ENCODE measurements at regions of chr10 and their contacts with region 1.

Region 1: GRCh38 chr10:119608316-119609155 is 11.8 kb upstream of the TIAL1 start:
- DNase-seq: no peak
- H3K4me3 ChIP-seq: peak overlapping the region in 2 of 4 donors; percentile 8 to 32
- H3K27ac ChIP-seq: no peak overlapping the region
- H3K4me1 ChIP-seq: peaks cover 6 to 9% (median 7%) of the 10 kb centered on the region in 4 donors
- H3K27me3 ChIP-seq: no peaks in the 10 kb centered on the region
- CTCF ChIP-seq: peak; percentile 76 to 77 (median 76)
- EP300 ChIP-seq: no peak
- POLR2A ChIP-seq: no peak

Region 2: DNA sequence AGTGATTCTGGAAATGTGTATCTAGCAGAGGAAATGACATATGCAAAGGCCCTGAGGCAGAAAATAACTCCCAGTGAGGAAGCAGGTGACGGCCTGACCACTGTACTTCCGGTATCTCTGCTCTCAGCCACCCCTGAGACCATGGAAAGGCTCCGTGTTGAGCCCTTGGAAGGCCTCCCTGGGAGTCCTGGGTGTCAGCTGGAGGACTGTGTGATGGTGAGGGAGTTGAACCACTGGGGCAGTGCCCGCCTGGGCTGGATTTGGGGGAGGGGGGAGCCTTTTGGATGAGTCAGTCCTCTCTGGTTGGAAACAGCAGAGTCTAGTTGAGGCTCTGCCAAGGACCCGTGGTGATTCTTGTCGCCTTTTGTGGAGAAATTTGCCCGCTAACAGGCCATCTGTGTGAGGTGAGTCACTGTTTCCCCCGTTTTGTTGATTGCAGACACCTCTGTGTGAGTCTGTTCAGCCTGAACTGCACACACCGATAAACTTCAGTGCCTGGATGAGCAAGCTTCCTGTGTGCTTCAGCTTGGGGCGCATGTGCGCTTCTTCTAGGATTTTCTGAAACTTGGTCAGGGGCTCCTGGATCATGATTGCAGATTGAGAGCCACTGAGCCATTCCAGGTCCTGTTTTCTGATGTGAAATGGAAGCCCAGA is 302.5 kb before region 1 on chr10:
- intact Hi-C with region 1: no loop called
- DNase-seq: peak; percentile 96
- H3K4me3 ChIP-seq: no peak overlapping the region
- H3K27ac ChIP-seq: peak overlapping the region; percentile 82 to 84 (median 84)
- H3K4me1 ChIP-seq: peaks cover 65 to 100% (median 96%) of the 10 kb centered on the region in 4 donors
- H3K27me3 ChIP-seq: no peaks in the 10 kb centered on the region
- CTCF ChIP-seq: no peak
- EP300 ChIP-seq: no peak
- POLR2A ChIP-seq: no peak

Region 3: GRCh38 chr10:119650692-119651513 is 42.4 kb after region 1 on chr10 and contains the start of gene BAG3:
- intact Hi-C with region 1: loop called (anchors 5 kb)
- DNase-seq: peak; percentile 98
- H3K4me3 ChIP-seq: peak within 1 kb of the TSS; percentile 77 to 99 (median 94)
- H3K27ac ChIP-seq: peak within 1 kb of the TSS; percentile 98 to 100 (median 99)
- H3K4me1 ChIP-seq: peaks cover 29 to 39% (median 36%) of the 10 kb centered on the region in 4 donors
- H3K27me3 ChIP-seq: no peaks in the 10 kb centered on the region
- CTCF ChIP-seq: peak in 1 of 3 experiments; percentile 11
- EP300 ChIP-seq: no peak
- POLR2A ChIP-seq: peak; percentile 55
- total RNA-seq, gene BAG3: 44.0 to 81.7 (median 73.9) TPM

Region 4: GRCh38 chr10:119686439-119687191 is 78.1 kb after region 1 on chr10:
- intact Hi-C with region 1: loop called (anchors 5 kb)
- DNase-seq: no peak
- H3K4me3 ChIP-seq: peak overlapping the region; percentile 18 to 40 (median 35)
- H3K27ac ChIP-seq: peak overlapping the region; percentile 12 to 62 (median 40)
- H3K4me1 ChIP-seq: peaks cover 20 to 23% (median 21%) of the 10 kb centered on the region in 4 donors
- H3K27me3 ChIP-seq: no peaks in the 10 kb centered on the region
- CTCF ChIP-seq: peak; percentile 90 to 96 (median 92)
- EP300 ChIP-seq: no peak
- POLR2A ChIP-seq: no peak

Measured in esophagus muscularis mucosa (tissue), 4 donors.